ENCODE measurements at regions of chrX and their contacts with region 1.

Region 1: DNA sequence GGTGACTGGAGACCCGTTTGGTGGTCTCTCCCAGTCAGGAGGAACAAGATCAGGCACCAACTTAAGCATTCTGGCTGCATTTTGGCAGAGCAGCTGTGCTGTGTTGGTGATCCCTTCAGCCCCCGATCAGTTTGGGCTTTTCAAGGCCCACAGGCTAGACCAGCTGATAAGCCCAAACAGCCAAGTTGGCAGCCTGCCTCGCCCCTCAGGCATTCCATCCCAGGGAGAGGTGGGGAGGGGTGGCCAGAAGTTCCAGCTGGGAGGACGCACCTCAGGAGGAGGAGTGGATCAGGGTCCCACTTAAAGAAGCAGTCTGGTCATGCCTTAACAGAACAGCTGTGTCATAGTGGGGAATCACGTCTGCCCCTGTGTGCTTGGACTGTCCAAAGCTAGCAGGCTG is 105.8 kb downstream of the CHIC1 start:
- DNase-seq: no peak
- H3K4me3 ChIP-seq: no peak overlapping the region
- H3K27ac ChIP-seq: no peak overlapping the region
- H3K4me1 ChIP-seq: no peaks in the 10 kb centered on the region
- H3K27me3 ChIP-seq: no peaks in the 10 kb centered on the region
- CTCF ChIP-seq: no peak
- POLR2A ChIP-seq: no peak

Region 2: DNA sequence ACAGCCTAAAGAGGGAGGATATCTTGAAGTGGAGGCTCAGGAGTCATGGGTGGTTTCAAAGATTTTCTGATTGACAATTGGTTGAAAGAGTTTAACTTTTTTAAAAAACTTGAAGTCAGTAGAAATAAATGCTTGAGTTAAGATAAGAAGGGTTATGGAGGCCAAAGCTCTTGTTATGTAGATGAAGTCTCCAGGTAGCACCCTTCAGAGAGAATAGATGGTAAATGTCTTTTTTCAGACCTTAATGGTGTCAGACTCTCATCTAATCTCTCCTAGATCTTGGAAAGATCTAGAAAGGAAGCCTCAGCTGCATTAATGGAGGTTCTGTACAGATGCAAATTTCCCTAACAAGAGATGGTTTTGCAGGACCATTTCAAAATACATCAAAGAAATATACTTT is 112.6 kb before region 1 on chrX:
- CTCF ChIA-PET with region 1: no interaction called
- POLR2A ChIA-PET with region 1: no interaction called
- dilution Hi-C with region 1: no loop called
- intact Hi-C with region 1: loop called (anchors 10 kb)
- DNase-seq: no peak
- H3K4me3 ChIP-seq: no peak overlapping the region
- H3K27ac ChIP-seq: no peak overlapping the region
- H3K4me1 ChIP-seq: no peaks in the 10 kb centered on the region
- H3K27me3 ChIP-seq: no peaks in the 10 kb centered on the region
- CTCF ChIP-seq: no peak
- POLR2A ChIP-seq: no peak

Region 3: DNA sequence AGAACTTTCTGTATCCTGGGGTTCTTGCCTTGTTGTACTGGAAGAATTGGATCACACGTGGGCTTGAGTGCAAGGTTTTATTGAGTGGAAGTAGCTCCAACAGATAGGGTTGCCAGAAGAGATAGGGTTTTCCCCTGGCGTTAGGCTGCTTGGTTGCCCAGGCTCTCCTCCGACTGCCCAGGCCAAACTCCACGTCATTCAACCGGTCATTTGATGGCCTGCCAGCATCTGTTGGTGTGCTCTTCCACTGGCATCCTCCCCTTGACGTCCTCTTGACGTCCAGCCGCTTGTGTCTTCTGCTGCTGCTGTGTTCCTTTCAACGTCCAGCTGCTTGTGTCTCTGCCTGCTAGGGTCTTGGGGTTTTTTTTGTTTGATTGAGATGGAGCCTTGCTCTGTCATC is 294.9 kb after region 1 on chrX:
- CTCF ChIA-PET with region 1: no interaction called
- POLR2A ChIA-PET with region 1: no interaction called
- dilution Hi-C with region 1: no loop called
- intact Hi-C with region 1: no loop called
- DNase-seq: no peak
- H3K4me3 ChIP-seq: no peak overlapping the region
- H3K27ac ChIP-seq: no peak overlapping the region
- H3K4me1 ChIP-seq: no peaks in the 10 kb centered on the region
- H3K27me3 ChIP-seq: no peaks in the 10 kb centered on the region
- CTCF ChIP-seq: no peak
- POLR2A ChIP-seq: no peak

Measured in endothelial cell of umbilical vein (primary cell).